ENCODE measurements at regions of chr6 and their contacts with region 1.

Region 1: DNA sequence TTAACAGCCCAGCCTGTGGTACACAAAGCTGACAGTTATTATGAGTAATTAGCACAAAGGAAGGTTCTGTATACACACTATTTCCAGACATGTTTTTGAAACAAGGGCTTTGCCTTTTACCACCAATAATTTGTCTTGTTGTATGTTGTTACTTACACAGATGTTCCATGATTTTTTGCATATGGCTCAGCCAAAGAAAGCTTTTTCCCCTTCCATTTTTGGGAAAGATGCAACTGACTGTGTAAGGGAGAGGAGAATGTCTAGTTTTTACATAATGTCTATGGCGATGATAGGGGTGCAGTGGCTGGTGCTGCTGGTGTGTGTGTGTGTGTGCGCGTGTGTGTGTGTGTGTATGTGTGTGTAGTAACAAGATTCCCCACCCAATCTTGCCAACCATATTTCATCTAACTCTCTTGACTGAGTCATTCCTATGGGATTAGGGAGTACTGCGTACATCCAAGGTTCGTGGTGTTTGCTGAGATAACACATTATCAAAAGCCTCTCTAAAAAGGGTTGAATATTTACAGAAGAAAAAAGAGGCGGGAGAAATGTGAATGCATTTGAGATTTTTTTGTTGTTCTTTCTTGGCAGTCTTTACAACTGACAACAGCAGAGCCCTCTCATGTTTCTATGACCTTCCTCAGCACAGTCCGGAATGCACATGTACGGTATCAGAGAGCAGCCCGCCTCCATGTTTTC is 192.2 kb downstream of the GMPR start:
- DNase-seq: no peak
- ATAC-seq: no peak
- H3K4me3 ChIP-seq: no peak overlapping the region
- H3K4me3 Mint-ChIP-seq: no peak overlapping the region
- H3K27ac ChIP-seq: no peak overlapping the region
- H3K27ac Mint-ChIP-seq: no peak overlapping the region
- H3K4me1 ChIP-seq: peaks cover 0 to 10% of the 10 kb centered on the region in 2 experiments
- H3K4me1 Mint-ChIP-seq: peaks cover 30 to 57% (median 34%) of the 10 kb centered on the region in 3 donors
- H3K27me3 ChIP-seq: no peaks in the 10 kb centered on the region
- H3K27me3 Mint-ChIP-seq: no peaks in the 10 kb centered on the region

Region 2: DNA sequence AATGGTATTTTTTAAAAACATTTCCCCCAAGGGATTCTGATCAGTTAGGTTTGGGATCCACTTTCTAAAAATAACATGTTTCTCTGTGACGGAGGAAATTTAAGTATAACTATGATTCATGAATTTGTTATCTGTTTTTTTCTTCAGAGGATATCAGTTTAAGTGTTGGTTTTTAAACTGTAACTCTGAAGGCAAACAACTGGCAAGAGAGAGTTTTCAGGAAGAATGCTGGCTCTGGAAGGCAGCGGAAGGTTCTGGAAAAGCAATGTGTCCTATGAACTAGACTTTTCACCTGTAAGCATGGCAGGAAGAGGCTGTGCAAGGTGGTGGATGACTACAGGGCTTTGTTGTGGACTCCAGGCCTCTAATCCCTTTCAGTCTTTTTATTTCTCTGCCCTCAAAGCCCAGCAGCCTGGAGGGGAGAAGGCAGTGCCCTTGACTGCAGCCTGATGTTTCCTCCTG is 39.1 kb before region 1 on chr6:
- CTCF ChIA-PET with region 1: no interaction called
- POLR2A ChIA-PET with region 1: no interaction called
- DNase-seq: no peak
- ATAC-seq: no peak
- H3K4me3 ChIP-seq: no peak overlapping the region
- H3K4me3 Mint-ChIP-seq: no peak overlapping the region
- H3K27ac ChIP-seq: no peak overlapping the region
- H3K27ac Mint-ChIP-seq: peak overlapping the region in 1 of 2 donors; percentile 6
- H3K4me1 ChIP-seq: no peaks in the 10 kb centered on the region
- H3K4me1 Mint-ChIP-seq: peaks cover 0 to 2% (median 0%) of the 10 kb centered on the region in 3 donors
- H3K27me3 ChIP-seq: no peaks in the 10 kb centered on the region
- H3K27me3 Mint-ChIP-seq: no peaks in the 10 kb centered on the region

Region 3: GRCh38 chr6:16464045-16464444 is 33.5 kb after region 1 on chr6:
- CTCF ChIA-PET with region 1: interaction called in 1 of 2 experiments, 13 read pairs
- POLR2A ChIA-PET with region 1: no interaction called
- DNase-seq: no peak
- ATAC-seq: no peak
- H3K4me3 ChIP-seq: no peak overlapping the region
- H3K4me3 Mint-ChIP-seq: no peak overlapping the region
- H3K27ac ChIP-seq: no peak overlapping the region
- H3K27ac Mint-ChIP-seq: no peak overlapping the region
- H3K4me1 ChIP-seq: peaks cover 0 to 7% of the 10 kb centered on the region in 2 experiments
- H3K4me1 Mint-ChIP-seq: peaks cover 0 to 41% (median 14%) of the 10 kb centered on the region in 3 donors
- H3K27me3 ChIP-seq: no peaks in the 10 kb centered on the region
- H3K27me3 Mint-ChIP-seq: no peaks in the 10 kb centered on the region

Region 4: GRCh38 chr6:16481697-16482399 is 51.3 kb after region 1 on chr6:
- CTCF ChIA-PET with region 1: interaction called in 1 of 2 experiments, 10 read pairs
- POLR2A ChIA-PET with region 1: no interaction called
- DNase-seq: peak in 33 of 35 experiments; percentile 42 to 91 (median 68)
- ATAC-seq: peak; percentile 81 to 84 (median 83)
- H3K4me3 ChIP-seq: no peak overlapping the region
- H3K4me3 Mint-ChIP-seq: peak overlapping the region; percentile 15 to 54 (median 17)
- H3K27ac ChIP-seq: peak overlapping the region; percentile 84
- H3K27ac Mint-ChIP-seq: peak overlapping the region; percentile 80 to 89
- H3K4me1 ChIP-seq: peaks cover 47 to 54% of the 10 kb centered on the region in 2 experiments
- H3K4me1 Mint-ChIP-seq: peaks cover 66 to 90% (median 83%) of the 10 kb centered on the region in 3 donors
- H3K27me3 ChIP-seq: no peaks in the 10 kb centered on the region
- H3K27me3 Mint-ChIP-seq: no peaks in the 10 kb centered on the region

Region 5: DNA sequence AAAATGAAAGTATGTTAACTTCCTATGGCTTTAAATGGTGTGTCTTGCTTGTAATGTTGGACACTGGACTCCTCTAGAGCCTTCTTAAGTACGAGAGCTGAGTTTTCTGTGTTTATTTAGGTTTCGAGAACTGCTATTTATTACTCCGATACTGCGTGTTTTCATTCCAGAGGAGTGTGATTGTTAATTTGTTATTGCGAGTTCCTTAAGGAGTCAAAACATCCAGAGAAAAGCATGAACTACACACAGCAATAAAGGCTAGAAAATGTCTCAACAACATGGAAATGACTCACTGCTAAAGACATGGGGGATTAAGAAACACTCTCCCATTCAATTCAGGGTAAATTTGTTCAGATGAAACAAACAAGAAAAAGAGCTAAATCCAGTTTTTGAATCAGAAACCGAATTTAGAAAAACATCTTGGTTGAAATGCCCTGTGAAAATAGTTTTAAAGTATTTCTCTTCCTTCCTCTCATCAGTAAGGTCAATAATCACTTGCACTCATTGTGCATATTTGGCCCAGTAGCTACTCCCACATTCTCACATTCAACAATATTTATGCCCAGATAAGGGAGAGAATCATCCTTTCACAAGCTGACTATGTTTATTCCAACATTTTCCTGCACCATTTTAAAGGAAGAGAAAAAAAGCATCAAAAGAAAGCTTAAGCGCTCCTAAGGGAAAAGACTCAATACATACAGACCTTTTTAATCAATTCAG is 294.8 kb after region 1 on chr6:
- CTCF ChIA-PET with region 1: no interaction called
- POLR2A ChIA-PET with region 1: no interaction called
- DNase-seq: no peak
- ATAC-seq: no peak
- H3K4me3 ChIP-seq: no peak overlapping the region
- H3K4me3 Mint-ChIP-seq: no peak overlapping the region
- H3K27ac ChIP-seq: no peak overlapping the region
- H3K27ac Mint-ChIP-seq: no peak overlapping the region
- H3K4me1 ChIP-seq: peaks cover 6 to 16% of the 10 kb centered on the region in 2 experiments
- H3K4me1 Mint-ChIP-seq: peaks cover 7 to 57% (median 38%) of the 10 kb centered on the region in 3 donors
- H3K27me3 ChIP-seq: no peaks in the 10 kb centered on the region
- H3K27me3 Mint-ChIP-seq: no peaks in the 10 kb centered on the region

Region 6: DNA sequence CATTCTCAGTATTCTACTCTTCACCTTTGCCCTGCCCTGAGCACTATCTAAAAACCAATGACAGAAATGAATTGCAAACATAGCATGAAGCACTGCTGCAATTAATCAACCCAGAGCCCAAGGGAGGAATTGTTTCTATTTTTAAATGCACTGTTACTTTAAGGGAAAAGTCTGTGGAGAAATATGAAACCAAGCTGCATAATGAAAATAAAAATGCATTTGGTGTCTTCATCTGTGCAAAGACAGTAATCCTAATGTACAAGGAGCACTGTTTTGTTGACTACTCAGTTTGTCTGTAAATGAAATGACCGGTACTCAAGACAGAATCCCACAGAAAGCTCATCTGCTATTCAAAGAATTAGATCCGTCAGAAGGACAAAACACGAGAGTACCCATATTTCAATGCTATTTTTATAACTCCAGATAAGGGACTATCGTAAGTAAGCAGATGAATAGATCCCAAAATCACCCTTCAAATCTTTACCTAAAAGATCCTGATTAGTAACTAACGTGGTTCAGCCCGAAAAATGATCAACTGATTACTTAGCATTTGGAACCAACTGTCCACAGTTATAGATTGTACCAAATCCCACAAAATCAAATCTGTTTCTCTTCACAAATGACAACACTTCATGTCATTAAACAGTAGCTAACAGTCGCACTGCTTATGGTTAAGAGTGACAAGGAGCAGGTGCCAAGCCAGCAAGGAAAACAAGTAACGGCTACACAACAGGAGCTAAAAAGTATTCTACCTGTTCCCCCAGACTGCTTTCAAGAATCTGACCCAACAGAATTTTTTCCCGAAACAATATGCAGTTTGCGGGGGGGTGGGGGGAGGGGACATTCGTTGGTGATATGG is 1554.5 kb after region 1 on chr6:
- CTCF ChIA-PET with region 1: no interaction called
- POLR2A ChIA-PET with region 1: no interaction called
- DNase-seq: no peak
- ATAC-seq: no peak
- H3K4me3 ChIP-seq: no peak overlapping the region
- H3K4me3 Mint-ChIP-seq: peak overlapping the region in 1 of 3 donors; percentile 28
- H3K27ac ChIP-seq: no peak overlapping the region
- H3K27ac Mint-ChIP-seq: no peak overlapping the region
- H3K4me1 ChIP-seq: peaks cover 0 to 16% of the 10 kb centered on the region in 2 experiments
- H3K4me1 Mint-ChIP-seq: peaks cover 7 to 23% (median 16%) of the 10 kb centered on the region in 3 donors
- H3K27me3 ChIP-seq: peaks cover 0 to 34% of the 10 kb centered on the region in 2 experiments
- H3K27me3 Mint-ChIP-seq: peaks cover 47 to 53% of the 10 kb centered on the region in 2 donors